Sigmoid colon (tissue), 7 donors: ENCODE measurements at regions of chr22 and their contacts with region 1.

Region 1: DNA sequence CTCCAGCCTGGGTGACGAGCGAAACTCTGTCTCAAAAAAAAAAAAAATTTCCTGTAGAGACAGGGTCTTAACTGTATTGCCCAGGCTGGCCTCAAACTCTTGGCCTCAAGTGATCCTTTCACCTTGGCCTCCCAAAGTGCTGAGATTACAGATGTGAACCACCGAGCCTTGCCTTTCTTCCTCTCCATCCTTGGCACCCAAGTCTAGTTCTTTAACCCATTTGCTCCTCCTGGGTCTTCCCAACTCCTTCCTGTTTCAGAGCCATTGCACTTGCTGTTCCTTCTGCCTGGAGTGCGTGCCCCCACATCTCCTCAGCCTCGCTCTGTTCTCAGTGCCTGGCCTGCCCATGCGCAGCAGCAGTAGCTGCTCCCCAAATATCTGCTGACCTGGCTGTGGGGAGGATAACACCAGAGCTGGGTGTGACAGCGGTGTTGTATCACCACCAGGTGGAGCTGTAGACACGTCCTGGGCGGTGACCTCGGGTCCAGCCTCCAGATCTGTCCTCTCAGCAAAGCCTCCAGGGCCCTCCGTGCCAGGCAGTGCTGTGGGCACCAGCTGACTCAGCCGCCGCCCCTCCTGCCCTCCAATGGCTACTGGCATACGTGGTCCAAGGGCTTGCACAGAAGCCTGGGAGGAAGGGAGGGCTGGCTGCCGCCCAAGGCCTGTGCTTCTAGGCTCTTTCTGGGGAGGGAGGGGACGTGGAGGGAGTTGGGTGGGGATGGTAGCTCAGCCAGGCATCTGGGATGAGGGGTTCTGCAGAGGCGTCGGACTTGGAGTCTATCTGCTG is 22.0 kb downstream of the TEF start:
- DNase-seq: peak; percentile 99
- H3K4me3 ChIP-seq: no peak overlapping the region
- H3K27ac ChIP-seq: peak overlapping the region; percentile 58 to 73 (median 70)
- H3K4me1 ChIP-seq: peaks cover 0 to 30% (median 22%) of the 10 kb centered on the region in 4 donors
- H3K27me3 ChIP-seq: no peaks in the 10 kb centered on the region
- CTCF ChIP-seq: peak; percentile 92 to 99 (median 98)
- EP300 ChIP-seq: peak in 2 of 4 donors; percentile 68 to 89
- POLR2A ChIP-seq: no peak

Region 2: GRCh38 chr22:41381329-41382097 is 22.2 kb before region 1 on chr22 and contains the start of gene TEF:
- intact Hi-C with region 1: loop called (anchors 2 kb)
- DNase-seq: peak; percentile 100
- H3K4me3 ChIP-seq: peak within 1 kb of the TSS; percentile 62 to 90 (median 85)
- H3K27ac ChIP-seq: peak within 1 kb of the TSS; percentile 90 to 99 (median 99)
- H3K4me1 ChIP-seq: peaks cover 0 to 36% (median 28%) of the 10 kb centered on the region in 4 donors
- H3K27me3 ChIP-seq: no peaks in the 10 kb centered on the region
- CTCF ChIP-seq: no peak
- EP300 ChIP-seq: peak in 2 of 4 donors; percentile 32 to 44
- POLR2A ChIP-seq: peak; percentile 16 to 57
- total RNA-seq, gene TEF: 21.3 to 30.3 (median 24.8) TPM

Region 3: GRCh38 chr22:41417622-41418390 is 14.1 kb after region 1 on chr22:
- intact Hi-C with region 1: no loop called
- DNase-seq: peak; percentile 99
- H3K4me3 ChIP-seq: peak overlapping the region in 1 of 4 donors; percentile 17
- H3K27ac ChIP-seq: peak overlapping the region; percentile 93 to 98 (median 98)
- H3K4me1 ChIP-seq: peaks cover 0 to 59% (median 48%) of the 10 kb centered on the region in 4 donors
- H3K27me3 ChIP-seq: no peaks in the 10 kb centered on the region
- CTCF ChIP-seq: no peak
- EP300 ChIP-seq: peak; percentile 90 to 98 (median 94)
- POLR2A ChIP-seq: peak; percentile 21 to 37

Region 4: DNA sequence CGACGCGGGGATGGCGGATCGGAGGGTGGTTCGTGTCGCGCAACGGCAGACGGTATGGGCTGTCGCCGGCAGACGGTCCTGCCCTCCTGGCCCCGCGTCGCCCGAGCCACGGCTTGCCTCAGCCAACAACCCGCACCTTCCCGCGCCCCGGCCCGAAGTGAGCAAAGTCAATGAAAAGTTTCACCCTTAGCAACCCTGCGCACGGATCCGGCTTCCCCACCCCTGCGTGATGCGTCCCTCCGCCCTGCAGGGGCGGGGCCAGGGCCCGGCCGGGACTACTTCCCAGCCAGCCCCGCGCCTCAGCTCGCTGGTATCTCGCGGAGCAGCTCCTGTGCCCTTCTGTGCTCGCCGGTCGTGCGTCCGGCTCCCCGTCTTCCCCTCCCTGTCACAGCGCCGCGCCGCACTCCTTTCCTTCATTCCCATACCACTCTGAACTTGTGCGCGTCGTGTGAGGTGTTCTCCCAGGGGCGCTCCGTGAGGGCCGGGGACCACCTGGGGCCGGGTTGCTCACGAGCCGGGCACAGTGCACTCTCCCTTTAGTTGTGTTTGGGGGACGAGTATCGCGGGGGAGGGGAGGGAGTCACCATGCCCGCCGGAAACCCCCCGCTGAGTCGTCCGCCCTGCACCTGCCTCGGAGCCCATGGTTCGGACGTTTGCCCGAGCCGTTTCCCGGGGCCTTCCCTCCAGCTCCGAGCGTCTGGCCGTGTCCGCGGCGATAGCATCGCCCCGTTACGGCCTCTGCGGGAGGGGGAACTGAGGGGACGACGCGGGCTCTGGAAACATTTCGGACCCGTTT is 43.1 kb after region 1 on chr22 and contains the start of gene TOB2:
- intact Hi-C with region 1: loop called (anchors 2 kb)
- DNase-seq: peak; percentile 98
- H3K4me3 ChIP-seq: peak within 1 kb of the TSS; percentile 89 to 99 (median 98)
- H3K27ac ChIP-seq: peak within 1 kb of the TSS; percentile 97 to 99 (median 98)
- H3K4me1 ChIP-seq: peaks cover 0 to 30% (median 23%) of the 10 kb centered on the region in 4 donors
- H3K27me3 ChIP-seq: no peaks in the 10 kb centered on the region
- CTCF ChIP-seq: no peak
- EP300 ChIP-seq: peak in 2 of 4 donors; percentile 48 to 88
- POLR2A ChIP-seq: peak; percentile 100
- total RNA-seq, gene TOB2: 23.2 to 38.2 (median 31.8) TPM

Region 5: GRCh38 chr22:41517172-41518047 is 113.7 kb after region 1 on chr22:
- intact Hi-C with region 1: loop called (anchors 2 kb)
- DNase-seq: peak; percentile 89
- H3K4me3 ChIP-seq: no peak overlapping the region
- H3K27ac ChIP-seq: peak overlapping the region; percentile 55 to 75 (median 62)
- H3K4me1 ChIP-seq: peaks cover 0 to 24% (median 19%) of the 10 kb centered on the region in 4 donors
- H3K27me3 ChIP-seq: no peaks in the 10 kb centered on the region
- CTCF ChIP-seq: peak; percentile 86 to 92 (median 90)
- EP300 ChIP-seq: no peak
- POLR2A ChIP-seq: no peak

Region 6: DNA sequence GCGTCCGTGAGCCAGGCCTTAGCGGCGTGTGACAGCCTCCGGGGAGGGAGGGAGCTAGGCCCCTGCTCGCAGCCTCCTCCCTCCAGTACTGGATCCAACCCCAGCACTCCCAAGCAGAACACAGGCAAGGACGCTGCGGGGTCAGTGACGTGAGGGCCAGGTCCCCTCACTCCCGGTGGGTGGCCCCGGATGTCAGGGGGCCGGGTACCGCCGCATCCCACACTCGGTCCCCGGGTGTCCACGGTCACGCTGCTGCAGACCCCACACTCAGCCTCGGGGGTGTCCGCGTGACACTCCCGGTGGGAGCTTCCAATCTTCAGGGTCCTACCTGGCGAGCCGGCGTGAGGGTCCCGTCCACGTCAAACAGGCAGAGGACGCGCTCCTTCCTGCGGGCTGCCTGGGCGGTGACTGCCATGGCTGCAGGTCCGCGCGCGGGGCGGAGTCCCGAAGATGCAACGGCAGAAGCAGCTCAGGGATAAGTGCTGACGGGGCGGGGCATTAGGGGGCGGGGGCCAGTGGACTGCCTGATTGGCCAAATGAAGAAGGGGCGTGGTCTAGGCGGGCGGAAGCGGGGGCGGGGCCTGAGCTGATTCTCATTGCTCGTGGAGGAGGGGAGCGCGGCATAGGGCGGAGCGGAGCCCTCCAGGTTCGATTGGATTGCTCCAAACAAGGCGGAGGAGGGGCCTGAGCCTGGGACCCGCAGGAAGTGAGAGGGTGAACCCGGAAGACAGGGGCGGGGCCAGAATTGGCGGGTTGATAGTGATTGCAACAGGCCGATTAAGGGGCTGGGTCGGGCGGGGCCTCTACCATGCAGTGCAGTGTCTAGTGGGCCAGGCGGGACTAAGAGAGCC is 185.9 kb after region 1 on chr22 and contains the start of gene PMM1:
- intact Hi-C with region 1: loop called (anchors 10 kb)
- DNase-seq: peak; percentile 100
- H3K4me3 ChIP-seq: peak within 1 kb of the TSS; percentile 77 to 96 (median 84)
- H3K27ac ChIP-seq: peak within 1 kb of the TSS; percentile 83 to 88 (median 86)
- H3K4me1 ChIP-seq: peaks cover 0 to 24% (median 17%) of the 10 kb centered on the region in 4 donors
- H3K27me3 ChIP-seq: no peaks in the 10 kb centered on the region
- CTCF ChIP-seq: no peak
- EP300 ChIP-seq: no peak
- POLR2A ChIP-seq: peak; percentile 95 to 97
- total RNA-seq, gene PMM1: 35.0 to 58.9 (median 43.6) TPM